Cardiac septum (tissue), 1 donor: ENCODE measurements at regions of chr3 and their contacts with region 1.

Region 1: GRCh38 chr3:169966428-169966950 is at the start of gene SEC62:
- DNase-seq: peak; percentile 97
- total RNA-seq, gene SEC62: 74.5 TPM

Region 2: GRCh38 chr3:169528289-169528688 is 438.2 kb before region 1 on chr3:
- intact Hi-C with region 1: no loop called
- DNase-seq: no peak

Region 3: GRCh38 chr3:169764452-169765274 is 201.8 kb before region 1 on chr3 and contains the start of gene TERC:
- intact Hi-C with region 1: loop called (anchors 5 kb)
- DNase-seq: peak; percentile 95
- total RNA-seq, gene TERC: 0.86 TPM

Region 4: DNA sequence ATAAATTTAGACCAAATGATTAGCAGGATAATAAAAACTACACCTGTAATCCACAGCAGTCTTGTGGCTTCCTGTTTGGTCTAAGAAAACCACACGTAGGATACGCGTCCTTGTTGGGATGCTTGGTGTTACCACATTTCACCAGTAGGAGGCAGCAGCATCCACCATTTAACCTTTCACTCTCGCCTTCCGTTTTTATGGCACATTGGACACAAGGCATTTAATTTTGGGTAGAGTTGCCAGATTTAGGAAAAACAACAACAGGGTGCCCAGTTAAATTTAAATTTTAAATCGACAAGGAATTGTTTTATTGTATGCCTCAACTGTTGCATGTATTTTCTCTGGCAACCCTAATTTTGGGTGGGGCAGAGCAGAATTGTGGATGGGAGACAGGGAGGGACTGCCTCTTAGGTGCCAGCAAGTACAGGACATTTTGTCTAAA is 103.0 kb before region 1 on chr3:
- intact Hi-C with region 1: loop called (anchors 2 kb)
- DNase-seq: no peak